GM12878 (cell line): ENCODE measurements at regions of chr5 and their contacts with region 1.

Region 1: GRCh38 chr5:160867976-160868375 is 16.0 kb upstream of the ATP10B start:
- DNase-seq: no peak
- ATAC-seq: no peak
- H3K4me3 ChIP-seq: no peak overlapping the region
- H3K27ac ChIP-seq: no peak overlapping the region
- H3K4me1 ChIP-seq: no peaks in the 10 kb centered on the region
- H3K27me3 ChIP-seq: no peaks in the 10 kb centered on the region
- CTCF ChIP-seq: no peak
- EP300 ChIP-seq: no peak
- POLR2A ChIP-seq: no peak
- RAD21 ChIP-seq: no peak

Region 2: DNA sequence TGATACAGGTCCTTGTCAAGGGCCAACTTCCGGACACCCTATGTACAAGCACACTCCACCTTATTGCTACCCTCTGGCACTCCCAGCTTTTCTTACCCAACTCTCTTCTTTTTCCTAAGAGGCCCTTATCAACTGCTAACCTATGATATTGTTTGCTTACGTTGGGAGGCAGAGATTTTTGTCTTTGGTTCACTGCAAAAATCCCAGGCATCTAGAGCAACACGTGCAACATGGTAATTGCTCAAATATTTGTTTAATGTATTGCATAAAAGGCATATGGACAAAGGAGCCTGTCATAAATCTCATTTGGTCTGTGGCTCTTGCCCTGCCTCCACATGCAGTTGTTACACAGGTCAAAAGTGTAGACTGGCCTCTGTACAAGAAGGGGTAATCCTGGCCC is 19.8 kb after region 1 on chr5:
- CTCF ChIA-PET with region 1: no interaction called
- POLR2A ChIA-PET with region 1: no interaction called
- RAD21 ChIA-PET with region 1: no interaction called
- SMC1A ChIA-PET with region 1: no interaction called
- in situ Hi-C with region 1: no loop called
- intact Hi-C with region 1: loop called (anchors 1 kb)
- DNase-seq: no peak
- ATAC-seq: no peak
- H3K4me3 ChIP-seq: no peak overlapping the region
- H3K27ac ChIP-seq: no peak overlapping the region
- H3K4me1 ChIP-seq: no peaks in the 10 kb centered on the region
- H3K27me3 ChIP-seq: no peaks in the 10 kb centered on the region; a peak in 1 of 4 replicates
- CTCF ChIP-seq: no peak
- EP300 ChIP-seq: no peak
- POLR2A ChIP-seq: no peak
- RAD21 ChIP-seq: no peak

Region 3: DNA sequence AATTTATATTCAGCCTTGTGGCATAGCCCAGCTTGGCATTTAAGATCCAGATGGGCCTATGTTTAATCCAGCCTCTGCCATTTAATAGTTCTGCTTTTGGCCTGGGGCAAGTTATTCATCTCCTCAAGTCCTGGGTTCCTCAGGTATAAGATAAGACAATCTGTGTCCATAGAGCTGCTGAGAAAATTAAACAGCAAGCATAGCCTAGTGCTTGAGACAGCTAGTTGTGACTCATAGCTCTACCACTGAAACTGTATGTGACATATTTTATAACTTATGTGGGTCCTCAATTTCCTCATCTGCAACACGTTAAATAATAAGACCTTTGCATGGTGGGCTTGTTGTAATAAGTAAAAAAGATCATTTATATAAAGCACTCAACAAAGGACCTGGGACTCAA is 37.3 kb after region 1 on chr5:
- CTCF ChIA-PET with region 1: no interaction called
- POLR2A ChIA-PET with region 1: no interaction called
- RAD21 ChIA-PET with region 1: no interaction called
- SMC1A ChIA-PET with region 1: no interaction called
- in situ Hi-C with region 1: no loop called
- intact Hi-C with region 1: no loop called
- DNase-seq: no peak
- ATAC-seq: peak; percentile 31; the same call in 1 of the 3 replicates
- H3K4me3 ChIP-seq: no peak overlapping the region
- H3K27ac ChIP-seq: no peak overlapping the region
- H3K4me1 ChIP-seq: no peaks in the 10 kb centered on the region
- H3K27me3 ChIP-seq: no peaks in the 10 kb centered on the region
- CTCF ChIP-seq: no peak
- EP300 ChIP-seq: no peak
- POLR2A ChIP-seq: no peak
- RAD21 ChIP-seq: no peak

Region 4: DNA sequence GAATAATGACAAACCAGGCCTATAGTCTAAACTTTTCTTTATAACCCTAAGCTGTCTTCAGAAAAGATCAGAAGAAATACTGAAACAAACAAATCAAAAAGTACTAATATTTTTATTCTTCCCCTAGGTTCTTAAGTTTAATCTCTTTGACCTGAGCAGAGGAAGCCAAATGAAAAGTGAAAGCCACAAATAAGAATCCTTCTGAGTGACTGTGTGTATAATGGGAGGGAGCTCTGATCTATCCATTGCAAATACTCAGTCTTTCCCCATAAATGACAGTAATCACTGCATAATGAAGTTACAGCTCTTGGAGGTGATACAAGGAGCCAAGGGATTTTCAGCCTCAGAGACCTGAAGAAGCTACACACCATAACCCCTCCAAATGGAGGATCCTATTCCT is 111.0 kb after region 1 on chr5:
- CTCF ChIA-PET with region 1: no interaction called
- POLR2A ChIA-PET with region 1: no interaction called
- RAD21 ChIA-PET with region 1: no interaction called
- SMC1A ChIA-PET with region 1: no interaction called
- in situ Hi-C with region 1: no loop called
- intact Hi-C with region 1: no loop called
- DNase-seq: no peak
- ATAC-seq: peak; percentile 56; the same call in 2 of the 3 replicates
- H3K4me3 ChIP-seq: no peak overlapping the region
- H3K27ac ChIP-seq: no peak overlapping the region
- H3K4me1 ChIP-seq: no peaks in the 10 kb centered on the region
- H3K27me3 ChIP-seq: no peaks in the 10 kb centered on the region
- CTCF ChIP-seq: no peak
- EP300 ChIP-seq: no peak
- POLR2A ChIP-seq: no peak
- RAD21 ChIP-seq: no peak